ENCODE measurements at regions of chrX and their contacts with region 1.

Region 1: DNA sequence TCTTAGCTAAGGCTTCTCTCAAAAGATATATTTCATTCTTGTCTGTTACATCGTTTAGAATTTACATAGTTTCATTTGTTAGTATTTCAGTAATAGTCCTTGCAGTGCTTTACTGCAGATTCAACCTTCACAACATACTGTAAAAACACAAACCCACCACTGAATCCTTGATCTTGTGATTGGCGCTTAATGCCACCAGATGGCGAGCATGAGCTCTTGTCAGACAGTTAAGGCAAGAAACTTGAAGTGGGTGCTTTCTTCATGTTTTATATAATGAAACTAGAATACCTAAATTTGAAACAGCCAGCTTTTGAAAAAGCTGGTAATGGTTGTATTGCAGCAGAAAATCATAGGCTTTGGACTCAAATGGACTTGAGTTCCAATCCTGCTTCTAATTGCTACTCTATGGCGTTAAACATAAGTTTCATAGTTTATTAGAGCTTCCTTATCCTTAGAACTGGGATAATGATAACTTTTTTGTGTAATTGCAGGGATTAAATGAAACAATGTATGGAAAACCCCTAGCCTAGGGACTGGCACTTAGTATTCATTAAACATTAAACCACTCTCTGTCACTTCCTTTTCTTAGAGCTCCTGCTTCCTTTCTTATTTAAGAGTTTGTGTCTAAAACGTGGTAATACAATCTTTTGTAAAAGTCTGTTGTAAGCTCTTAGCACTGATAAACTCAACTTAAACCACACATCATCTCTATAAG is 95.1 kb downstream of the USP9X start:
- DNase-seq: no peak
- H3K4me3 ChIP-seq: no peak overlapping the region
- H3K27ac ChIP-seq: no peak overlapping the region
- H3K4me1 ChIP-seq: peaks cover 0 to 9% (median 0%) of the 10 kb centered on the region in 3 donors
- H3K27me3 ChIP-seq: no peaks in the 10 kb centered on the region
- CTCF ChIP-seq: peak; percentile 38 to 68 (median 58)
- POLR2A ChIP-seq: no peak

Region 2: GRCh38 chrX:41259516-41259915 is 79.2 kb after region 1 on chrX:
- intact Hi-C with region 1: loop called (anchors 10 kb)
- DNase-seq: no peak
- H3K4me3 ChIP-seq: no peak overlapping the region
- H3K27ac ChIP-seq: no peak overlapping the region
- H3K4me1 ChIP-seq: no peaks in the 10 kb centered on the region
- H3K27me3 ChIP-seq: no peaks in the 10 kb centered on the region
- CTCF ChIP-seq: no peak
- POLR2A ChIP-seq: no peak

Region 3: GRCh38 chrX:41384041-41384705 is 203.8 kb after region 1 on chrX:
- intact Hi-C with region 1: no loop called
- DNase-seq: no peak
- H3K4me3 ChIP-seq: no peak overlapping the region
- H3K27ac ChIP-seq: peak overlapping the region; percentile 64 to 83 (median 72)
- H3K4me1 ChIP-seq: peaks cover 0 to 43% (median 12%) of the 10 kb centered on the region in 3 donors
- H3K27me3 ChIP-seq: no peaks in the 10 kb centered on the region
- CTCF ChIP-seq: peak in 3 of 6 experiments; percentile 5 to 17 (median 9)
- POLR2A ChIP-seq: no peak